Activated CD8-positive, alpha-beta memory T cell treated with anti-CD3 and anti-CD28 coated beads, Interleukin-2, amount 10 ng/mL, durations not matched to agents 7 days and 5 days (primary cell): ENCODE measurements at regions of chr6 and their contacts with region 1.

Region 1: DNA sequence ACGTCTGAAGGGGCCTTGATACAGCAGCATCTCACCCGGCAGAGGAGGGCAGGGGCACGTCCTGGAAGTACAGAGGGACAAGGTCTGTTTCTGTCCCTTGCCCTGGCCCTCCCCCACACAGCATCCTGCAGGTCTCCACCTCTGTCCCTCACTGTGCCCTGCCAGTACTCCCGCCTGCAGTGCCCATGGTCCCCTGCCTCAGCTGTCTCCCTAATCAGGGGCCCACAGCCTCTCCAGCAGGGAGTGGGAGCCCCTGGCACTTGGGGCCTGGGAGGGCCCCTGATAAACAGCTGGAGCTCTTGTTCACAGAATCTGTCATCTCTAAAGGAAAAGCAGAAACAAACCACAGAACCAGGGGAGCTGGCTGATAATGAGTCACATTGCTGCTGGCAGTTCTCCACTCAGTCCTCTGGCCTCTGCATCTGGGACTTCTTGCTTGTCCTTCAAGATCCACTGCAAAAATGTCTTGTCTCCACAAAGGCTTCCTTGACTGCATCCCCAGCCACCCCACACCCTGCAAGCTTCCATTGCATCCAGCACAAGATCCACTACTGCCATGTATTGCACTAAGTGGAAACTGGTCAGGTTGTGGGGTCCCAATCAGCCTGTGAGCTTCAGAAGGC is 33.2 kb upstream of the TAF8 start:
- DNase-seq: peak; percentile 74
- ATAC-seq: peak; percentile 82
- H3K4me3 Mint-ChIP-seq: peak overlapping the region; percentile 22
- H3K27ac Mint-ChIP-seq: peak overlapping the region; percentile 91
- H3K4me1 Mint-ChIP-seq: peaks cover 68% of the 10 kb centered on the region
- H3K27me3 Mint-ChIP-seq: no peaks in the 10 kb centered on the region

Region 2: GRCh38 chr6:41836022-41836659 is 181.0 kb before region 1 on chr6:
- CTCF ChIA-PET with region 1: no interaction called
- DNase-seq: no peak
- ATAC-seq: no peak
- H3K4me3 Mint-ChIP-seq: no peak overlapping the region
- H3K27ac Mint-ChIP-seq: no peak overlapping the region
- H3K4me1 Mint-ChIP-seq: no peaks in the 10 kb centered on the region
- H3K27me3 Mint-ChIP-seq: no peaks in the 10 kb centered on the region

Region 3: GRCh38 chr6:41927253-41927652 is 89.9 kb before region 1 on chr6:
- CTCF ChIA-PET with region 1: no interaction called
- DNase-seq: no peak
- ATAC-seq: no peak
- H3K4me3 Mint-ChIP-seq: no peak overlapping the region
- H3K27ac Mint-ChIP-seq: peak overlapping the region; percentile 70
- H3K4me1 Mint-ChIP-seq: peaks cover 43% of the 10 kb centered on the region
- H3K27me3 Mint-ChIP-seq: no peaks in the 10 kb centered on the region

Region 4: GRCh38 chr6:41941280-41942066 is 75.7 kb before region 1 on chr6 and contains the start of gene CCND3:
- CTCF ChIA-PET with region 1: interaction called, 12 read pairs
- DNase-seq: peak; percentile 95
- ATAC-seq: peak; percentile 84
- H3K4me3 Mint-ChIP-seq: peak within 1 kb of the TSS; percentile 99
- H3K27ac Mint-ChIP-seq: peak within 1 kb of the TSS; percentile 89
- H3K4me1 Mint-ChIP-seq: peaks cover 55% of the 10 kb centered on the region
- H3K27me3 Mint-ChIP-seq: no peaks in the 10 kb centered on the region
- total RNA-seq, gene CCND3: 333 to 502 TPM

Region 5: DNA sequence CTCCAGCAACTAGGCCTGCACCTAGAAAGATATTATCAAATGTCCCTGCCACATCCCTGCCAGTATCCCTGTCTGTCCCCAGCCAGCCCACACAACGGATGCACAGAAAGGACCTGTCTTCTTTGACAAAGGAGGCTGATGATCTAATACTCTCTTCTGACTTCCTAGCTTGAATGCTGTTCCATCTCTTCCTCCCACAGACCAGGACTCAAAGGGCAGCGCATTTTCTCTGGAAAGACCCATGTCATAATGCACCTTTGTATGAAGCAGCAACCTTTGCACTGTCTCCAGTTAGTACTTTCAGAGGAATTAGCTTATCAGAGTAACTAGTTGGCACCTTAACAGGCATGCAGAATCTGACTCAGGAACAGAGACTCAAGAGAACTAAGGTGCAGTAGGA is 20.1 kb before region 1 on chr6:
- CTCF ChIA-PET with region 1: no interaction called
- DNase-seq: no peak
- ATAC-seq: no peak
- H3K4me3 Mint-ChIP-seq: no peak overlapping the region
- H3K27ac Mint-ChIP-seq: no peak overlapping the region
- H3K4me1 Mint-ChIP-seq: peaks cover 10% of the 10 kb centered on the region
- H3K27me3 Mint-ChIP-seq: no peaks in the 10 kb centered on the region

Region 6: DNA sequence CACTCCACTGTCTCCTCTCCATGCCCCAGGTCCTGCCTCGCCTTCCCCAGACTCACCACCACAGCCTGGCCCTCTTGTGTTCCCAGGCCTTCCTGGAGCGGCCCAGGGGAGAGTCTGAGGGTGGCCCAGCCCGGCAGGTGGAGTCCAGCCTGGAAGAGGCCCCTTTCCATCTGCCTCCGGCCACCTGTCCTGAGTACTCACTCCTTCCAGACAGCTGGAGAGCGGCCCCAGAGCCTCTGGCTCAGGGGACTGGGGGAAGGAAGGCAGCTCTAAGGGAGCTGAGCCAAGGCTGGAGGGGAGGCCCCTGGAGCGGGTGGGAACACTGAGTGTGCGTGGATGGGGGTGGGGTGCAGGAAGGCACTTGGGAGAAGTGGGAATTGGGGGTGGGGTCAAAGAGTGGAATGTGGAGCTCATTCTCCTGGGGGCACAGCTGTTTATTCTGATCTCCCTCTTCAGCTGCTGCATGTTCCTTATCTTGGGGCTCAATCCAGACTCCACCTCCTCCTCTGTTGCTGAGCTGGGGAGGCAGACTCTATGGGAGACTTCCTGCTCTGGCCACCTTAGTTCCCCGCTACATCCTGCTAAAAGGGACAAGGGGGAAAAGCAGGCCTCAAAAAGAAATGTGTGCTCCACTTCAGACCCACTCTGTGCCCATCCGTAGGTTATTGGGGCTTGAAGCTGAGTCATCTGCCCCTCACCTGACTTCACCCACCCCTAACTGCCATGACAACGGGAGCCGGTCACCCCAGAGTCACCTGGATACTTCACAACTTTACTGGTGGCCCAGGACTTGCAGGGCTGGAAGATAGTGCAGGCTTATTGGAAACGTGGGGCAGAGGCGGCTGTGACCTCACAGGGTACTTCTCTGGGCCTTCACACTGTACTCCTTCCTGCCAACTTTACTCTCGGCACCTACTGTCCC is 13.7 kb after region 1 on chr6:
- CTCF ChIA-PET with region 1: interaction called, 12 read pairs
- DNase-seq: peak; percentile 63
- ATAC-seq: peak; percentile 39
- H3K4me3 Mint-ChIP-seq: peak overlapping the region; percentile 3
- H3K27ac Mint-ChIP-seq: peak overlapping the region; percentile 89
- H3K4me1 Mint-ChIP-seq: peaks cover 79% of the 10 kb centered on the region
- H3K27me3 Mint-ChIP-seq: no peaks in the 10 kb centered on the region

Region 7: DNA sequence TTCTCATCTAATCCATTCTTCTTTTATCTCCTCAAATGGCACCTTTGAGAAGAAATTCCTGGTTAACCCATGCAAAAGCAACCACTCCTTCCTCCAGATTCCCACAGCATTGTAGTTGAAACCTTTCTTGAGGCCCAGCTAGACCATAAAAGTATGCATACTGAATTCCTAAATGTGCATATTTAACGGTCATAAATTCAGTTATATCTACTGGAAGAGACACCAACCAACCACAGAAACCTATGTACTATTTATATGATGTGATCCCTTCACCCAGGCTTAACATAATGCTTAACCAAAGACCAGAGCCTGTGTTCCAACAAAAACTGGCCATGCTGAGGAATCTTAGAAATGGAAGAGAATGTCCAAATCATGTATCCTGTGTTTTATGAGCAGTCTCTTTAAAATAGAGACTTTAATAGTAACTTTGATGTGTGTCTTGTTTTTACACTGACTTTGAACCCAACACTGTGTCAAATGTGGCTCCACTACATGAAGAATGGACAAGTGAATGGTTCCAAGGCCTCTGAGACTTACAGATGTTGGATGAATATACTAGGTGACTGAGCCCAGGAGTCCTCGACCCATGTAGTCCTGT is 21.8 kb after region 1 on chr6:
- CTCF ChIA-PET with region 1: interaction called, 17 read pairs
- DNase-seq: no peak
- ATAC-seq: no peak
- H3K4me3 Mint-ChIP-seq: peak overlapping the region; percentile 70
- H3K27ac Mint-ChIP-seq: peak overlapping the region; percentile 95
- H3K4me1 Mint-ChIP-seq: peaks cover 76% of the 10 kb centered on the region
- H3K27me3 Mint-ChIP-seq: no peaks in the 10 kb centered on the region